ENCODE measurements at regions of chr10 and their contacts with region 1.

Region 1: GRCh38 chr10:67936416-67936815 is 52.0 kb downstream of the SIRT1 start:
- DNase-seq: no peak
- H3K4me3 ChIP-seq: no peak overlapping the region
- H3K27me3 ChIP-seq: no peaks in the 10 kb centered on the region
- CTCF ChIP-seq: no peak

Region 2: GRCh38 chr10:67912339-67912946 is 24.0 kb before region 1 on chr10:
- CTCF ChIA-PET with region 1: no interaction called
- POLR2A ChIA-PET with region 1: interaction called, 20 read pairs
- DNase-seq: no peak
- H3K4me3 ChIP-seq: no peak overlapping the region
- H3K27me3 ChIP-seq: no peaks in the 10 kb centered on the region
- CTCF ChIP-seq: no peak

Region 3: GRCh38 chr10:68318331-68319059 is 382.1 kb after region 1 on chr10:
- CTCF ChIA-PET with region 1: no interaction called
- POLR2A ChIA-PET with region 1: interaction called, 16 read pairs
- DNase-seq: no peak
- H3K4me3 ChIP-seq: no peak overlapping the region
- H3K27me3 ChIP-seq: no peaks in the 10 kb centered on the region
- CTCF ChIP-seq: no peak

Measured in BJ (cell line).